ENCODE measurements at regions of chr20 and their contacts with region 1.

Region 1: GRCh38 chr20:49344975-49345374 is 67.1 kb upstream of the ZNFX1 start:
- DNase-seq: peak in 8 of 10 donors; percentile 44 to 95 (median 74)

Region 2: GRCh38 chr20:49424536-49424935 is 79.6 kb after region 1 on chr20:
- intact Hi-C with region 1: loop called (anchors 10 kb)
- DNase-seq: peak; percentile 32 to 98 (median 86)

Measured in posterior cingulate gyrus (tissue), 11 donors.